ENCODE measurements at regions of chr13 and their contacts with region 1.

Region 1: GRCh38 chr13:98542568-98543377 is 34.1 kb downstream of the STK24 start:
- DNase-seq: peak; percentile 53
- ATAC-seq: peak; percentile 63
- H3K4me3 Mint-ChIP-seq: peak overlapping the region; percentile 66
- H3K27ac Mint-ChIP-seq: peak overlapping the region; percentile 87
- H3K4me1 Mint-ChIP-seq: peaks cover 94% of the 10 kb centered on the region
- H3K27me3 Mint-ChIP-seq: no peaks in the 10 kb centered on the region

Region 2: DNA sequence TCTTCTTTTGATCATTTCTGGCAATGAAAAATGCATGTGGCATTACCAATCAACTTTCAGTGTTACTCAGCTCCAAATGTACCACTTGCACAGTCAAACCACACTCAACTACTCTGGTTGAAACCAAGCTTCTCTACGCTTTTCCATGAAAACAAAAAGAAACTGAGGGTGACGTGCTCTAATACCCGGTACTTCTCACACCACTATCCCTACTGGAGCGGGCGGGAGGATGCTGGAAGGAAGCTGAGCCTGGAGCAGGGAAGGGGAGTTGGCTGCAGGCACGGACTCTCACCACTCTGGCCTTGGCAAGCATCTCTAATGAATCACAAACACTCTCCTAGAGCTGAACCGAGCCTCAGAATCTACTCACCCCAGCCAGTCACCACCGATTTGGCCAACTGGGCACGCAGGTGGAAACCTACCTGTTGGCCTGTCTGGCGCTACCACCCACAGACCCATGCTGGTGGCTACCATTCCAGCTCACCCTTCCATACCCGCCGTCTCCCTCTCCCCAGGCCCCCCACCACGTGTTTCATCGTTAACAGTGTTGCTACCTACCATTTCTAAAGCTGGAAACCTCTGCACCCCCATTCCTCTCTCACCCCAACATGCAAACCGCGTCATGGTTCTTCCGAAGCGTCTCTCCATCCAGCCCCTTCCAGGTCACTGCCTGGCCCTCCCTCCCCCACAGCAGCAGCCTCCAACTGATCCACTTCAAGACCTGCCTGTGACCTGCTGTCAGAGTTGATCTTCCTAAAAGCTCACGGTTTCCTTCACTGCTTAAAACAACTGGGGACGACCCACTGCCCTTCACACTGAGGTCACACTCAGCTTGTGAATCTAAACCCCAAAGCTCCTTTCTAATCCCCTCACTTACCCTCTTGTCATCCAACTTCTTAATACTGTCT is 13.9 kb before region 1 on chr13:
- CTCF ChIA-PET with region 1: interaction called, 16 read pairs
- POLR2A ChIA-PET with region 1: interaction called, 6 read pairs
- intact Hi-C with region 1: no loop called
- DNase-seq: peak; percentile 55
- ATAC-seq: peak; percentile 80
- H3K4me3 Mint-ChIP-seq: peak overlapping the region; percentile 29
- H3K27ac Mint-ChIP-seq: peak overlapping the region; percentile 87
- H3K4me1 Mint-ChIP-seq: peaks cover 93% of the 10 kb centered on the region
- H3K27me3 Mint-ChIP-seq: no peaks in the 10 kb centered on the region

Region 3: GRCh38 chr13:98564204-98564603 is 21.4 kb after region 1 on chr13:
- CTCF ChIA-PET with region 1: interaction called, 10 read pairs
- POLR2A ChIA-PET with region 1: interaction called, 5 read pairs
- intact Hi-C with region 1: no loop called
- DNase-seq: peak; percentile 47
- ATAC-seq: peak; percentile 53
- H3K4me3 Mint-ChIP-seq: peak overlapping the region; percentile 72
- H3K27ac Mint-ChIP-seq: peak overlapping the region; percentile 88
- H3K4me1 Mint-ChIP-seq: peaks cover 93% of the 10 kb centered on the region
- H3K27me3 Mint-ChIP-seq: no peaks in the 10 kb centered on the region

Region 4: GRCh38 chr13:98632961-98633360 is 90.2 kb after region 1 on chr13:
- CTCF ChIA-PET with region 1: no interaction called
- POLR2A ChIA-PET with region 1: no interaction called
- intact Hi-C with region 1: no loop called
- DNase-seq: no peak
- ATAC-seq: no peak
- H3K4me3 Mint-ChIP-seq: no peak overlapping the region
- H3K27ac Mint-ChIP-seq: no peak overlapping the region
- H3K4me1 Mint-ChIP-seq: peaks cover 2% of the 10 kb centered on the region
- H3K27me3 Mint-ChIP-seq: peaks cover 2% of the 10 kb centered on the region